Common myeloid progenitor, CD34-positive (primary cell): ENCODE measurements at regions of chr11 and their contacts with region 1.

Region 1: DNA sequence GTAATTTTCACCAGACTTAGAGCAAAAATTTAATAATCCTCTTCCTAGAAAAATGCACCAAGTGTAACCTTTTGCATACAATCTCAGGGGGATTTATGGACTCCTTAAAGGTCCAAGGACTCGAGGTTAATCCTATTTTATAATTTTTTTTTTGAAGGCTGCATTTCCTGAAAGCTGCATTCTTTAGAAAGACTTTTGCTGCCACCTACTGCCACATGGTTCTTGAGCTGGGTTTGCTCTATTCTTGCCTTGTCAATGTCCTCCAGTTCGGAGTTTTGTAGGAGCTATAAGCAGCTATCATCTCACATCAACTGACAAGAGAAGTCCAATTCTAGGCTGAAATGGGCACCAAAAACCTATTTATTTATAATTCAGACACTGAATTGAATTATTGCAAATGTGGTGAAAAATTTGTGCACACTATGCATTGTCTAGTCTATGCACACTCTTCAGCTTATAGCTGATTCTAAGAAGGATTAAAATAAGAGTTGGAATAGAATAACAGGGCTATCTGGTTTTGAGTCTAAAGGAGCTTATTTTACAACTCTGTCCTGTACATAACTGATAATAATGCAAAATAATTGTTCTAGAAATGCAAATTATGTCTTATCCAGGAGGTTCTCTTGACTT is 31.3 kb downstream of the TRAF6 start:
- DNase-seq: peak; percentile 71 to 83 (median 79)
- H3K4me3 ChIP-seq: no peak overlapping the region
- H3K27ac ChIP-seq: no peak overlapping the region
- H3K4me1 ChIP-seq: peaks cover 0 to 3% (median 0%) of the 10 kb centered on the region in 4 experiments
- H3K27me3 ChIP-seq: no peaks in the 10 kb centered on the region

Region 2: DNA sequence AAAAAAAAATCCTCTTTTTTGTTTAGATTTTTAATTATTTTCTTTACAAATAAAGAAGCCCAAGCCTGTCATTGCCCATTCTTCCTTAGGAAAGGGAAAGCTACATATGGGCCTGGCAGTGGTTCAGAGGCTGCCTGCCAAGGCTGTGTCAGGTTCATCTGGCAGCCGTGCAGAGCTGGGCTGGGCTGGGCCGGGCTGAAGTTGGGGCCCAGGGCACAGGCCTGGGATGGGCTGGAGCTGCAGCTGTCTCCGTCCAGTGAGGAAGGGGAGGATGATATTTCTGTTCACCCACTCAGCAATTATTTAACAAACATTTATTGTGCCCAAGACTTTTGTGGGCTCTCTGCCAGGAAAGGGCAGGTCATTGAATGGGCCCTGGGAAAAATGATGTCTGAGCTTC is 178.2 kb before region 1 on chr11:
- CTCF ChIA-PET with region 1: interaction called, 191 read pairs
- POLR2A ChIA-PET with region 1: no interaction called
- DNase-seq: no peak
- H3K4me3 ChIP-seq: no peak overlapping the region
- H3K27ac ChIP-seq: no peak overlapping the region
- H3K4me1 ChIP-seq: peaks cover 0 to 5% (median 2%) of the 10 kb centered on the region in 4 experiments
- H3K27me3 ChIP-seq: no peaks in the 10 kb centered on the region

Region 3: DNA sequence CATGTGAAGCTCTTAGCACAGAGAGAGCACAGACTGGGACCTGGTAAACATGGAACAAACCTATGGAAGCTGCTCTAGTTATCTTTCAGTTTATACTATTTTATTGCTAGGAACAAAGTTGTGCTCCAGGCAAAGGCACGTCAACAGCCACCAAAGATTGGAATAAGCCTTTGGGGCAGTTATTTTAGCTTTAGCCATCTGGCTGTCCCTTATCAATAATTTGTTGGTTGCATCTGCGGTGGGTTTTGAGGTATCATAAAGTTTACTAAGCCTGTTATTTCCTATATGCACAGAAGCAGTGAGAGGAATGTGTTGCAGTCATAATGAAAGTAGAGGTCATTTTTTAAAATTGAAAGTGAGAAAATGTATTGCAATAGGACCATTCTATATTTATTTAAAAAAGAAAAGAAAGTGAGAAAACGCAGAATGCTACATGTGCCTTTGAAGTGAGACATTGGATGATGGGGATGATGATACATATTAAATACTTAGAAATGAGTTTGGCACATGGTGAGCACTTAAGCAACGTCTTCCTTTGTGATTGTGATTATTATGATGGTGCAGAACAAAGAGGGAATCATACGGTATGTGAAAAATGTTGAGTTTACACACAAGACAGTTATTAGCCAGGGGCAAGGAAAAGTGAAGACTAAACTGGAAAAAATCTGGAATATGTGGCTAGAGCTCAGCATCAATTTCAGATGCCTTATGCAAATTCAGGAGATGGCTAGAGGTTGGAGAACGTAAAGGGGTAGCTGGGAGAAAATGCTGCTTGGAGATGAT is 124.4 kb before region 1 on chr11:
- CTCF ChIA-PET with region 1: interaction called, 50 read pairs
- POLR2A ChIA-PET with region 1: no interaction called
- DNase-seq: no peak
- H3K4me3 ChIP-seq: no peak overlapping the region
- H3K27ac ChIP-seq: no peak overlapping the region
- H3K4me1 ChIP-seq: peaks cover 16 to 44% (median 18%) of the 10 kb centered on the region in 4 experiments
- H3K27me3 ChIP-seq: no peaks in the 10 kb centered on the region

Region 4: GRCh38 chr11:36398231-36398953 is 80.4 kb before region 1 on chr11:
- CTCF ChIA-PET with region 1: interaction called, 10 read pairs
- POLR2A ChIA-PET with region 1: no interaction called
- DNase-seq: no peak
- H3K4me3 ChIP-seq: no peak overlapping the region
- H3K27ac ChIP-seq: peak overlapping the region in 1 of 2 experiments; percentile 29
- H3K4me1 ChIP-seq: peaks cover 12 to 66% (median 59%) of the 10 kb centered on the region in 4 experiments
- H3K27me3 ChIP-seq: no peaks in the 10 kb centered on the region

Region 5: DNA sequence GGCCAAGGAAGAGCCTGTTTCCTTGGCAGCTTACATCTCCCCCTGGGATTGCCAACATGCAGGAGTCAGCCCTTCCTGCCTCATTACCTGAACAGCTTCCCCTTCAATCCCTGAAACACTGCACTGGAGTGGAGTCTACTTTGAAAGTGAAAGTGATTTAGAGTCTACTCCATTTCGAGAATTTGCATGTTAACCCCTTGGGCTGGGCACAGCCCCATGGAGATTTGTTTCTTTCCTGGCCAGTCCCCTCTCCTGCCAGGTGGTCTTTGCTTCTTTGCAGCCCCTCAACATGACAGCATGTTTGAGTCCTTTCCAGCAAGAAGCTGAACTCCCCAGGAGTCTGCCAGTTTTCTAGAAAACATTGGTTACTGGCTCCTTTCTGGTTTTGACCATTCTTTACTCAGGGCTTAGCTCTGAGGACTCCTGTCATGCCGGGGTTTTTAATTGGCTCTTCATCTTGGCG is 28.7 kb before region 1 on chr11:
- CTCF ChIA-PET with region 1: interaction called, 15 read pairs
- POLR2A ChIA-PET with region 1: no interaction called
- DNase-seq: peak; percentile 21 to 57 (median 48)
- H3K4me3 ChIP-seq: peak overlapping the region in 6 of 7 experiments; percentile 12 to 74 (median 38)
- H3K27ac ChIP-seq: peak overlapping the region; percentile 0 to 27
- H3K4me1 ChIP-seq: peaks cover 28 to 64% (median 61%) of the 10 kb centered on the region in 4 experiments
- H3K27me3 ChIP-seq: no peaks in the 10 kb centered on the region